ENCODE measurements at regions of chr1 and their contacts with region 1.

Region 1: DNA sequence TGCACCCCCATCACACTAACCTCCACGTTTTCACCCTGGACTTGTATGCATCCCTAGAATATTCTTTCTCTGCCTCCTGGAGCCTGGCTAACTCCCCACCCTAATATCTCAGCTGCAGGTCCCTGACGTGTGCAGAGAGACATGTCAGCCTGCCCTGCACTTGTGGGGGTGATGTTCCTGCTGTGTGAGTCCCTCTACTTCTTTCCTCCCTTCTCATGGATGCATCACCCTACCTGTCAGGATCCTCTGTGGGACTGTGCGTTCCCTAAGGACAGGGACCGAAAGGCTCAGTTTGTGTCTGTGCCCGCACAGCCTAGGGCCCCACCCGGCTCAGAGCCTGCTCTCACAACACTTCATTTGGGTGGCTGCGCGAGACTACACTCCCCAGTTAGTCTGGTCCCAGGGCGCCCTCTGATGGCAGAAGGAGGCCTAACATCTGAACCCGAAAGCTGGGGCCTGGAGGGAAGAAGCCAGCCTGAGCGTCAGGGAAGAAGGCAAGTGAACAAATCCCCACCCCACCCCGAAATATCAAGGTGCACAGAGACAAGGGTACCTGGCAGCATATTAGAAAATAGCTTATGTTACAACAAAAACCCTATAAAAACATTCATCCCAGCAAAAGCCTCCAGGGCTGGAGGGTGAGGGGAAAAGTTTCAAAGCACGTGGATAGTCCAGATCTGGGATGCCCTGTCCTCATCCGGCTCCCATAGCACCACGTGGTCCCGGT is 3.7 kb downstream of the CD52 start:
- DNase-seq: peak; percentile 90 to 99 (median 94)
- ATAC-seq: peak; percentile 76
- H3K4me3 ChIP-seq: peak overlapping the region; percentile 99
- H3K4me3 Mint-ChIP-seq: peak overlapping the region; percentile 97
- H3K27ac ChIP-seq: peak overlapping the region; percentile 52 to 82
- H3K27ac Mint-ChIP-seq: peak overlapping the region; percentile 86
- H3K4me1 ChIP-seq: peaks cover 47% of the 10 kb centered on the region
- H3K4me1 Mint-ChIP-seq: peaks cover 60% of the 10 kb centered on the region
- H3K27me3 ChIP-seq: no peaks in the 10 kb centered on the region
- H3K27me3 Mint-ChIP-seq: no peaks in the 10 kb centered on the region
- CTCF ChIP-seq: peak; percentile 93

Region 2: GRCh38 chr1:26111530-26112406 is 209.7 kb before region 1 on chr1 and contains the start of gene PDIK1L:
- CTCF ChIA-PET with region 1: no interaction called
- POLR2A ChIA-PET with region 1: no interaction called
- intact Hi-C with region 1: loop called in 1 of 2 experiments (anchors 2 kb)
- DNase-seq: peak; percentile 91 to 99 (median 95)
- ATAC-seq: peak; percentile 86
- H3K4me3 ChIP-seq: peak within 1 kb of the TSS; percentile 99
- H3K4me3 Mint-ChIP-seq: peak within 1 kb of the TSS; percentile 96
- H3K27ac ChIP-seq: peak within 1 kb of the TSS; percentile 34 to 73
- H3K27ac Mint-ChIP-seq: peak within 1 kb of the TSS; percentile 92
- H3K4me1 ChIP-seq: peaks cover 24% of the 10 kb centered on the region
- H3K4me1 Mint-ChIP-seq: peaks cover 38% of the 10 kb centered on the region
- H3K27me3 ChIP-seq: no peaks in the 10 kb centered on the region
- H3K27me3 Mint-ChIP-seq: no peaks in the 10 kb centered on the region
- CTCF ChIP-seq: no peak
- total RNA-seq, gene PDIK1L: 9.5 to 9.9 TPM

Region 3: GRCh38 chr1:26233903-26234643 is 87.4 kb before region 1 on chr1 and contains the start of gene CEP85:
- CTCF ChIA-PET with region 1: interaction called, 45 read pairs
- POLR2A ChIA-PET with region 1: interaction called, 11 read pairs
- intact Hi-C with region 1: no loop called
- DNase-seq: peak; percentile 97 to 100 (median 99)
- ATAC-seq: peak; percentile 89
- H3K4me3 ChIP-seq: peak within 1 kb of the TSS; percentile 77
- H3K4me3 Mint-ChIP-seq: peak within 1 kb of the TSS; percentile 98
- H3K27ac ChIP-seq: peak within 1 kb of the TSS; percentile 83 to 88
- H3K27ac Mint-ChIP-seq: peak within 1 kb of the TSS; percentile 95
- H3K4me1 ChIP-seq: peaks cover 21% of the 10 kb centered on the region
- H3K4me1 Mint-ChIP-seq: peaks cover 39% of the 10 kb centered on the region
- H3K27me3 ChIP-seq: no peaks in the 10 kb centered on the region
- H3K27me3 Mint-ChIP-seq: no peaks in the 10 kb centered on the region
- CTCF ChIP-seq: peak; percentile 85
- total RNA-seq, gene CEP85: 7.6 to 8.4 TPM

Region 4: GRCh38 chr1:26284597-26285360 is 36.7 kb before region 1 on chr1:
- CTCF ChIA-PET with region 1: interaction called, 223 read pairs
- POLR2A ChIA-PET with region 1: interaction called, 977 read pairs
- intact Hi-C with region 1: loop called (anchors 1 kb)
- DNase-seq: peak; percentile 76 to 98 (median 94)
- ATAC-seq: peak; percentile 70
- H3K4me3 ChIP-seq: peak overlapping the region; percentile 44
- H3K4me3 Mint-ChIP-seq: peak overlapping the region; percentile 89
- H3K27ac ChIP-seq: peak overlapping the region; percentile 89 to 94
- H3K27ac Mint-ChIP-seq: peak overlapping the region; percentile 95
- H3K4me1 ChIP-seq: peaks cover 96% of the 10 kb centered on the region
- H3K4me1 Mint-ChIP-seq: peaks cover 92% of the 10 kb centered on the region
- H3K27me3 ChIP-seq: no peaks in the 10 kb centered on the region
- H3K27me3 Mint-ChIP-seq: no peaks in the 10 kb centered on the region
- CTCF ChIP-seq: peak; percentile 83

Region 5: GRCh38 chr1:26358411-26359384 is 37.2 kb after region 1 on chr1:
- CTCF ChIA-PET with region 1: interaction called, 16 read pairs
- POLR2A ChIA-PET with region 1: interaction called, 9 read pairs
- intact Hi-C with region 1: loop called in 1 of 2 experiments (anchors 5 kb)
- DNase-seq: peak; percentile 52 to 93 (median 67)
- ATAC-seq: peak; percentile 89
- H3K4me3 ChIP-seq: peak overlapping the region; percentile 2
- H3K4me3 Mint-ChIP-seq: peak overlapping the region; percentile 52
- H3K27ac ChIP-seq: no peak overlapping the region
- H3K27ac Mint-ChIP-seq: peak overlapping the region; percentile 68
- H3K4me1 ChIP-seq: peaks cover 56% of the 10 kb centered on the region
- H3K4me1 Mint-ChIP-seq: peaks cover 42% of the 10 kb centered on the region
- H3K27me3 ChIP-seq: peaks cover 0 to 23% of the 10 kb centered on the region in 2 experiments
- H3K27me3 Mint-ChIP-seq: peaks cover 27% of the 10 kb centered on the region
- CTCF ChIP-seq: no peak

Region 6: GRCh38 chr1:26378088-26378878 is 56.8 kb after region 1 on chr1:
- CTCF ChIA-PET with region 1: interaction called, 10 read pairs
- POLR2A ChIA-PET with region 1: interaction called, 55 read pairs
- intact Hi-C with region 1: no loop called
- DNase-seq: peak; percentile 56 to 94 (median 76)
- ATAC-seq: peak; percentile 92
- H3K4me3 ChIP-seq: peak overlapping the region; percentile 22
- H3K4me3 Mint-ChIP-seq: peak overlapping the region; percentile 74
- H3K27ac ChIP-seq: peak overlapping the region; percentile 53 to 60
- H3K27ac Mint-ChIP-seq: peak overlapping the region; percentile 92
- H3K4me1 ChIP-seq: peaks cover 77% of the 10 kb centered on the region
- H3K4me1 Mint-ChIP-seq: peaks cover 72% of the 10 kb centered on the region
- H3K27me3 ChIP-seq: no peaks in the 10 kb centered on the region
- H3K27me3 Mint-ChIP-seq: no peaks in the 10 kb centered on the region
- CTCF ChIP-seq: no peak

Region 7: GRCh38 chr1:26399034-26399433 is 77.6 kb after region 1 on chr1:
- CTCF ChIA-PET with region 1: interaction called, 10 read pairs
- POLR2A ChIA-PET with region 1: no interaction called
- intact Hi-C with region 1: no loop called
- DNase-seq: no peak
- ATAC-seq: no peak
- H3K4me3 ChIP-seq: no peak overlapping the region
- H3K4me3 Mint-ChIP-seq: no peak overlapping the region
- H3K27ac ChIP-seq: no peak overlapping the region
- H3K27ac Mint-ChIP-seq: no peak overlapping the region
- H3K4me1 ChIP-seq: peaks cover 5% of the 10 kb centered on the region
- H3K4me1 Mint-ChIP-seq: peaks cover 4% of the 10 kb centered on the region
- H3K27me3 ChIP-seq: peaks cover 6 to 8% of the 10 kb centered on the region in 2 experiments
- H3K27me3 Mint-ChIP-seq: peaks cover 22% of the 10 kb centered on the region
- CTCF ChIP-seq: no peak

Measured in CD4-positive, alpha-beta T cell (primary cell).